ENCODE measurements at regions of chr5 and their contacts with region 1.

Region 1: GRCh38 chr5:14101922-14102321 is 41.2 kb upstream of the TRIO start:
- DNase-seq: no peak
- ATAC-seq: no peak
- H3K4me3 ChIP-seq: no peak overlapping the region
- H3K27ac ChIP-seq: no peak overlapping the region
- H3K4me1 ChIP-seq: no peaks in the 10 kb centered on the region
- H3K27me3 ChIP-seq: no peaks in the 10 kb centered on the region
- CTCF ChIP-seq: no peak
- POLR2A ChIP-seq: no peak

Region 2: DNA sequence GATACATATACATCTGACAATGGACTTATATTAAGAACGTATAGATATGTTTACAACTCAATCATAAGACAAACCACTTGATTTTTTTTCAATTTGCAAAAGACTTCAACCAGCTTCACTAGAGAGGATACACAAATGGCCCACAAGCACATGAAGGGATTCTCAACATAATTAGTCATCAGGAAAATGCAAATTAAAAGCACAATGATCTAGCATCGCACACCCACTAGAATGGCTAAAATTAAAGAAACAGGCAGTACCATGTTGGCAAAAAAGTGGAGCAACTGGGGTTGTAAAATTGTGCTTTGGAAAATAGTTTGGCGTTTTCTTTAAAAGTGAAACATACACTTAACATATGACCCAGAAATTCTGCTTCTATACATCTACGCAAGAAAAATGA is 38.8 kb before region 1 on chr5:
- intact Hi-C with region 1: no loop called
- DNase-seq: no peak
- ATAC-seq: no peak
- H3K4me3 ChIP-seq: no peak overlapping the region
- H3K27ac ChIP-seq: no peak overlapping the region
- H3K4me1 ChIP-seq: no peaks in the 10 kb centered on the region
- H3K27me3 ChIP-seq: no peaks in the 10 kb centered on the region
- CTCF ChIP-seq: no peak
- POLR2A ChIP-seq: no peak

Region 3: GRCh38 chr5:14270209-14270702 is 168.3 kb after region 1 on chr5:
- intact Hi-C with region 1: loop called (anchors 5 kb)
- DNase-seq: no peak
- ATAC-seq: peak; percentile 77 to 90 (median 82)
- H3K4me3 ChIP-seq: no peak overlapping the region
- H3K27ac ChIP-seq: no peak overlapping the region
- H3K4me1 ChIP-seq: peaks cover 0 to 30% (median 9%) of the 10 kb centered on the region in 4 donors
- H3K27me3 ChIP-seq: no peaks in the 10 kb centered on the region
- CTCF ChIP-seq: peak; percentile 72 to 82 (median 82)
- POLR2A ChIP-seq: no peak

Measured in right lobe of liver (tissue), 6 donors.